Activated CD4-positive, alpha-beta T cell treated with anti-CD3 and anti-CD28 coated beads, Interleukin-2, amount 10 ng/mL, durations not matched to agents 24 days and 14 days (primary cell): ENCODE measurements at regions of chr2 and their contacts with region 1.

Region 1: DNA sequence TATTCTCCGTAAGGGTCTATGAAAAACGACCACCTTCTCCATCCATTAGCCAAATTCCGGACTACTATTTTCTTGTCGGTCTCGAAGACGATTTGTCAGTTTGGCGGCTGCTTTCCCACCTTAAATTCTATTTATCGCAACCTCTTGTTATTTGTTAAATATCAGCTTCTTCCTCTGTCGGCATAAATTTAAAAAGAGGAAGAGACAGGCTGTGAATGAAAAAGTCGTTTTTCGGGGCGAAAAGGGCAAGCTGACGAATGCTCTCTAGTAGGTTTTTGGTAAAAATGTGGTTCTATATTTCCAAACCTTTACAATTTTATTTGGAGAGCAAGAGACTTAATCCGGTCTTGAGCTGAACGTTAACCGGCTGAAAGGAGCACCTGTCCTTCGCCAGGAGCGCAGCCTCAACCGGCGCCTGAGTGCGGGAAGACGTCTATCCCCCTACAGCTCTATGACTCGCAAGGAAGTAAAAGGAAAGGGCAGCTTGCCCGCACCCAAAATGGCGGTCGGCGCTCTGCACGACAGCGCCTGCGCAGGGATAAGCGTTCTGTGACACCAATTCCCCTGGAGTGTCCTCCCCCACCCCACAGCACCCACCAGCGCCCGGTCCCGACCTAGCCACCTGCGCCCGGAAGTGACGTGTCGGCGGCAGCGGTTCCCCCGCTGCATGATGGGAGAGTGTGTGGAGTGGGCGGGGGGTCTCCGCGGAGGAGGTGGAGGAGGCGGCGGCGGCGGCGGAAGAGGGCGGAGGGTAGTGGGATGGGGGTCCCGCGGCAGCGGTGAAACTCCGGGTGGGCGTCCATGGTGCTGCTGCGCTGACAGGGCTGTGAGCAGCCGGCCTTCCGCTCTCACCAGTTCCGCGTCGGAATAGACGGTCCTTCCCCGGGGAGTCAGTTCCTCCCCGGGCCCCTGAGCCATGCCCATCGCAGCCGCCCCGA is at the start of gene AFTPH:
- DNase-seq: peak; percentile 100
- H3K4me3 Mint-ChIP-seq: peak within 1 kb of the TSS; percentile 97
- H3K27ac Mint-ChIP-seq: peak within 1 kb of the TSS; percentile 100
- H3K4me1 Mint-ChIP-seq: peaks cover 40% of the 10 kb centered on the region
- H3K27me3 Mint-ChIP-seq: peaks cover 8% of the 10 kb centered on the region
- total RNA-seq, gene AFTPH: 39.1 and 39.6 TPM in 2 replicates

Region 2: GRCh38 chr2:63841254-63842022 is 682.5 kb before region 1 on chr2 and contains the start of gene UGP2:
- intact Hi-C with region 1: loop called (anchors 2 kb)
- DNase-seq: peak; percentile 96
- H3K4me3 Mint-ChIP-seq: peak within 1 kb of the TSS; percentile 96
- H3K27ac Mint-ChIP-seq: peak within 1 kb of the TSS; percentile 100
- H3K4me1 Mint-ChIP-seq: peaks cover 48% of the 10 kb centered on the region
- H3K27me3 Mint-ChIP-seq: peaks cover 3% of the 10 kb centered on the region
- total RNA-seq, gene UGP2: 66.3 and 66.5 TPM in 2 replicates

Region 3: GRCh38 chr2:64330281-64331113 is 193.4 kb before region 1 on chr2:
- intact Hi-C with region 1: loop called (anchors 1 kb)
- DNase-seq: peak; percentile 92
- H3K4me3 Mint-ChIP-seq: peak overlapping the region; percentile 50
- H3K27ac Mint-ChIP-seq: peak overlapping the region; percentile 80
- H3K4me1 Mint-ChIP-seq: peaks cover 58% of the 10 kb centered on the region
- H3K27me3 Mint-ChIP-seq: peaks cover 2% of the 10 kb centered on the region

Region 4: GRCh38 chr2:64493788-64494187 is 30.1 kb before region 1 on chr2:
- intact Hi-C with region 1: no loop called
- DNase-seq: no peak
- H3K4me3 Mint-ChIP-seq: no peak overlapping the region
- H3K27ac Mint-ChIP-seq: no peak overlapping the region
- H3K4me1 Mint-ChIP-seq: peaks cover 7% of the 10 kb centered on the region
- H3K27me3 Mint-ChIP-seq: peaks cover 40% of the 10 kb centered on the region

Region 5: DNA sequence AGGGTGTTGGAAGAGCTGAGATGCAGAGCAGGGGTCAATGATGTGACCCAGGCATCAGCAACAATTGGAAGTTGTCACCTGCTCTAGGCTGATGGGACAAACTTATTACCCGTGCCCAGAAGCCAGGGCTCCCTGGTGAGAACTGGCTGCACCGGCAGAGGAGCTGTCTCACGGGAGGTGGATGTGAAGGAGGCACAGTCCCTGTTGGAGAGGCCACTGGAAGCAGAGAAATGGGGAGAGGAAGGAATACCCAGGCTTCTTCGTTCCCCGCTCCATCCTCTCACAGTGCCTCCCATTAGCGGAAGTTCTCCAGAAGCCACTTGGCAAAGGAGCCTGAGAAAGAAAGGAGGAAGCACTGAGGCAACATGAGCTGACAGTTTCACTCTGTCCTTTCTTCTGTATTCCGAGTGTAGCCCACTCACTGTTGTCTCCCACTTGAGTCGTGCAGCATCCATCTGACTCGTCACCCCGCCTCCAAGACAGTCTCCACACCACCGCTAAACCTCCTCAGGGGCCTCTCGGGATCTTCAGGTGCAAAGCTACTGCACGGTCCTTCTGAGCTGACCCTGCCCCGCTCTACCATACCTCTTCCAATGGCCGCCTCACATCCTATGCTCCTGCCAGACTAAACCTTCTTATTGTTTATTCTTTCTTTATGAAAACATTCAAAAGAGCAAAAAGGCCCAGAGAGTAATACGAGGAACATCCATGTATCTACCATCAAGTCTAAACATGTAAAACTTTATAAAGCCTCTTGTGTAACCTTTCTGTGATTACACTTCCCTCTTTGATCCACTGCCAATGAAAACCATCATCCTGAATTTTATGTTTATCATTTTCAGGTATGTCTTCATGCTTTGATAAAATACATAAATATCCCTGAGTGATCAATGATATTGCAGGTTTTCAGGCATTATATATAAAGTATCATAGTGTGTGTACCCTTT is 18.9 kb before region 1 on chr2:
- intact Hi-C with region 1: no loop called
- DNase-seq: no peak
- H3K4me3 Mint-ChIP-seq: no peak overlapping the region
- H3K27ac Mint-ChIP-seq: no peak overlapping the region
- H3K4me1 Mint-ChIP-seq: peaks cover 7% of the 10 kb centered on the region
- H3K27me3 Mint-ChIP-seq: peaks cover 12% of the 10 kb centered on the region

Region 6: DNA sequence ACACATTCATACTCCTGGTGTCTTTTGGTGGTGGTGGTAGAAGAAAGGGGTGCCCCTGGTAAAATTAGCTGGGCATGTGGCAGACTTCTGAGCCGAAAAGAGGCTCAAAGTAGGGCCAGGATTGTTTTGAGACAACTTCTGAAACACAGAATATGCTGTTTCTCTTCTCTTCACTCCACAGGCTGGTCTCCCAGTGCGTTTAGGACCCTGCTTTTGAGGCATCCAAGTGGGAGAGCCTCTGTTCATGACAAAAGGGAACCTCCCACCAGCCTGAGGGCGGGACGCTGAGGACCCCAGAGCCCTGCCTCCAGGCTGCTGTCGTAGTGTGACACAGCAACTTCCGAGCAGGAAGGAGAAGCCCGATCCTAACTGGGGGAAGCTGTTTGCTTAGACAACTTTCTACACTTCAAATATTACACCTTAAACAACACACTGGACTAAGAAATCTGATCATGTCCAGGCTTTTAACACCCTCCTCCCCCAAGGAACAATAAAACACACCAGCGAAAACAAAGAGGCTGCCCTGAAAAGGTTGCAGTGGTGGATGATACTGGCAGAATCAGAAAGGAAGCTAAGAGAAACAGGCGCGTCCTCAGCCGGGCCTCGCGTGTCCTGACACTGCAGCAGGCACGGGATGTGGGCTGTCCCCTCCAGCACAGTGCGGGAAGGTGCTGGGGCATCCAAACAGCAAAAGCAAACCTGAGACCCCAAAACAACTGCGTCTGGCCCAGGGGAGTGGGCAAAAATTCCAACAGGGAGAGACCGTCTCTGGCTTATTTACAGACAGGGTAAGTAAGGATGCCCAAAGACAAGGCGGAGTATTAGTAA is 120.5 kb after region 1 on chr2:
- intact Hi-C with region 1: loop called (anchors 2 kb)
- DNase-seq: peak; percentile 88
- H3K4me3 Mint-ChIP-seq: peak overlapping the region; percentile 84
- H3K27ac Mint-ChIP-seq: peak overlapping the region; percentile 92
- H3K4me1 Mint-ChIP-seq: peaks cover 77% of the 10 kb centered on the region
- H3K27me3 Mint-ChIP-seq: no peaks in the 10 kb centered on the region

Region 7: DNA sequence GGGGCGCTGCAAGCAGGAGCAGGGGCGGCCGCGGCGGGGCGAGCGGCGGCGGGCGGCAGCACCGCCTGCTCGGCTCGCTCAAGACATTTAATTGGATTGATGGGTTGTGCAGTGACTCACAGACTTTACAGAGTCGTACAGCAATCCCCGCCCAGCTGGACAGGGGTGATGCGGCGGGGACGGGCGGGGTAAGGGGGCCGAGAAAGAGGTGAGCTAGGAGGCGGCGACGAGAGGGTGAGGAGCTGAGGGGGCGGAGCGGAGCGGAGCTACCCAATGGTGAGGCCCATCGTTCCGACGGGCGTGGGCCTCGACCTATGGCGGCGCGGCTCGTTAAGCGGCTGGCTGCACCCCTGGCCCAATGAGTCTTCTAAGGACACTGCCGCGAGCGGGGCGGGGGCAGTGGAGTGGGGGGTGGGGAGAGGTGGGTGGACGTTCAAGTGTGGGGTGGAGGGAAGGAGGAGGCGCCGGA is 226.9 kb after region 1 on chr2:
- intact Hi-C with region 1: loop called (anchors 1 kb)
- DNase-seq: peak; percentile 99
- H3K4me3 Mint-ChIP-seq: peak overlapping the region; percentile 98
- H3K27ac Mint-ChIP-seq: peak overlapping the region; percentile 99
- H3K4me1 Mint-ChIP-seq: peaks cover 22% of the 10 kb centered on the region
- H3K27me3 Mint-ChIP-seq: no peaks in the 10 kb centered on the region

Region 8: GRCh38 chr2:64988420-64989125 is 464.6 kb after region 1 on chr2:
- intact Hi-C with region 1: loop called (anchors 2 kb)
- DNase-seq: peak; percentile 93
- H3K4me3 Mint-ChIP-seq: peak overlapping the region; percentile 77
- H3K27ac Mint-ChIP-seq: peak overlapping the region; percentile 74
- H3K4me1 Mint-ChIP-seq: peaks cover 54% of the 10 kb centered on the region
- H3K27me3 Mint-ChIP-seq: peaks cover 16% of the 10 kb centered on the region